ENCODE measurements at regions of chr12 and their contacts with region 1.

Region 1: DNA sequence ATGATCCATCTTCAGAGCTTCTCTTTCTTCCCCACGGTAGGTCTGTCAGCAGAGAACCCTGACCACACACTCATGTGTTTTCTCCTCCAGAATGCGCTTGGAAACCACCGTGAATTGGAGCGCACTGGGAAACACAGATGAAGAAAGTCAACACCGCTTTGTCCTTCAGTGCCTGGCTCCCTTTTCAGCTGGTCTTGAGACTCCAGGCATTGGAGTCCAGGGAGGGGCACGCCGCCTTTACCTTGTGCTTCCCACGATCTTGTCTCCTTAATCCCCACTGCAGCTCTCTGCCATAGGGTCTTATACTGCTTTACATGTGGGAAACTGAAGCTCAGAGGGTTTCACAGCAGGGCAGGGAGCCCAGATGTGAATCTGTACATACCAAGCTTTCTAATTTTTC is 1.1 kb downstream of the FAM90A1 start:
- DNase-seq: no peak
- ATAC-seq: no peak
- H3K4me3 Mint-ChIP-seq: no peak overlapping the region
- H3K27ac Mint-ChIP-seq: no peak overlapping the region
- H3K4me1 Mint-ChIP-seq: no peaks in the 10 kb centered on the region
- H3K27me3 Mint-ChIP-seq: no peaks in the 10 kb centered on the region
- CTCF ChIP-seq: no peak

Region 2: GRCh38 chr12:8108808-8109398 is 117.5 kb before region 1 on chr12:
- CTCF ChIA-PET with region 1: interaction called, 18 read pairs
- POLR2A ChIA-PET with region 1: no interaction called
- intact Hi-C with region 1: loop called (anchors 1 kb)
- DNase-seq: peak; percentile 45
- ATAC-seq: peak; percentile 77
- H3K4me3 Mint-ChIP-seq: no peak overlapping the region
- H3K27ac Mint-ChIP-seq: no peak overlapping the region
- H3K4me1 Mint-ChIP-seq: peaks cover 2% of the 10 kb centered on the region
- H3K27me3 Mint-ChIP-seq: no peaks in the 10 kb centered on the region
- CTCF ChIP-seq: peak; percentile 97

Region 3: GRCh38 chr12:8870586-8870985 is 644.2 kb after region 1 on chr12:
- CTCF ChIA-PET with region 1: no interaction called
- POLR2A ChIA-PET with region 1: no interaction called
- intact Hi-C with region 1: no loop called
- DNase-seq: no peak
- ATAC-seq: no peak
- H3K4me3 Mint-ChIP-seq: no peak overlapping the region
- H3K27ac Mint-ChIP-seq: no peak overlapping the region
- H3K4me1 Mint-ChIP-seq: no peaks in the 10 kb centered on the region
- H3K27me3 Mint-ChIP-seq: no peaks in the 10 kb centered on the region
- CTCF ChIP-seq: no peak

Measured in activated B cell treated with CpG ODN at 0.5 μM for 24 hours (primary cell).